ENCODE measurements at regions of chr3 and their contacts with region 1.

Region 1: GRCh38 chr3:112734718-112735350 is 93.9 kb upstream of the CCDC80 start:
- DNase-seq: peak; percentile 78
- ATAC-seq: peak; percentile 81
- H3K4me3 ChIP-seq: no peak overlapping the region
- H3K27ac ChIP-seq: no peak overlapping the region
- H3K4me1 ChIP-seq: 0 out of 2 replicates have a peak, but pooled peaks cover 1% of the 10 kb centered on the region
- H3K27me3 ChIP-seq: no peaks in the 10 kb centered on the region
- CTCF ChIP-seq: peak; percentile 82
- POLR2A ChIP-seq: no peak
- RAD21 ChIP-seq: peak; percentile 86

Region 2: GRCh38 chr3:112303764-112304325 is 431.0 kb before region 1 on chr3:
- CTCF ChIA-PET with region 1: no interaction called
- POLR2A ChIA-PET with region 1: no interaction called
- dilution Hi-C with region 1: no loop called
- in situ Hi-C with region 1: no loop called
- intact Hi-C with region 1: no loop called
- DNase-seq: peak; percentile 28
- ATAC-seq: peak; percentile 64
- H3K4me3 ChIP-seq: peak overlapping the region; percentile 27; the same call in 1 of the 2 replicates
- H3K27ac ChIP-seq: no peak overlapping the region
- H3K4me1 ChIP-seq: peaks cover 12% of the 10 kb centered on the region
- H3K27me3 ChIP-seq: no peaks in the 10 kb centered on the region
- CTCF ChIP-seq: no peak
- POLR2A ChIP-seq: no peak
- RAD21 ChIP-seq: no peak

Region 3: GRCh38 chr3:112582244-112582874 is 152.5 kb before region 1 on chr3:
- CTCF ChIA-PET with region 1: no interaction called
- POLR2A ChIA-PET with region 1: no interaction called
- dilution Hi-C with region 1: no loop called
- in situ Hi-C with region 1: no loop called
- intact Hi-C with region 1: loop called (anchors 10 kb)
- DNase-seq: peak; percentile 80
- ATAC-seq: peak; percentile 80
- H3K4me3 ChIP-seq: no peak overlapping the region
- H3K27ac ChIP-seq: no peak overlapping the region
- H3K4me1 ChIP-seq: peaks cover 4% of the 10 kb centered on the region
- H3K27me3 ChIP-seq: no peaks in the 10 kb centered on the region
- CTCF ChIP-seq: peak; percentile 69
- POLR2A ChIP-seq: no peak
- RAD21 ChIP-seq: peak; percentile 80

Region 4: DNA sequence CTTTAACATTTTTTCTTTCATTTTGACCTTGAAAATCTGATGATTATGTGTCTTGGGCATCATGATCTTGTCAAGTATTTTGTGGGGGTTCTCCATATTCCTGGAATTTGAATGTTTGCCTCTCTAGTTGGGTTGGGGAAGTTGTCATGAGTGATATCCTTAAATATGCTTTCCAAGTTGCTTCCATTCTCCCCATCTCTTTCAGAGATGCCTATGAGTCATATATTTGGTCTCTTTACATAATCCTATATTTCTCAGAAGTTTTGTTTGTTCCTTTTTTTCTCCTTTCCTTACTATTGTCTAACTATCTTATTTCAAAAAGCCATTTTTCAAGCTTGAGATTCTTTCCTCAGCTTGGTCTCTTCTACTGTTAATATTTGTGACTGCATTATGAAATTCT is 24.9 kb before region 1 on chr3:
- CTCF ChIA-PET with region 1: no interaction called
- POLR2A ChIA-PET with region 1: no interaction called
- dilution Hi-C with region 1: no loop called
- in situ Hi-C with region 1: no loop called
- intact Hi-C with region 1: no loop called
- DNase-seq: peak; percentile 17
- ATAC-seq: no peak; the same call in 1 of the 2 replicates
- H3K4me3 ChIP-seq: no peak overlapping the region
- H3K27ac ChIP-seq: no peak overlapping the region
- H3K4me1 ChIP-seq: no peaks in the 10 kb centered on the region
- H3K27me3 ChIP-seq: no peaks in the 10 kb centered on the region
- CTCF ChIP-seq: no peak
- POLR2A ChIP-seq: no peak
- RAD21 ChIP-seq: no peak

Region 5: DNA sequence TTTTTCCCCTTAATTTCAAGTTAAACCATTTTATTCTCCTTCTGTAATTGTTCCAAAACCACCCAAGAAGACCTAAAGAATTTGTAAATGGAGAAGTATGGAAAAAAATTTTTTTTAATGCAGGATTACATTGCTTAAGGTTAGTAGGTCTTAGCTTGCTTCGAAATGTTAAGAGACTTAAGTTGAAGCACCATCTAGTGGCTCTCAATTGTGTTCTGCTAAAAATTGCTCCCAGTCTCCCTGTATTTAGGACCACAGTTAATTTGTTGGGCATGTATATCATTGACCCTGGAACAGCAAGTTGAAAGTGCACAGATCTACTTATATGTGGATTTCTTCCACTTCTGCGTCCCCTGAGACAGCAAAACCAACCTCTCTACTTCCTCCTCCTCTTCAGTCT is 79.4 kb after region 1 on chr3:
- CTCF ChIA-PET with region 1: interaction called, 35 read pairs
- POLR2A ChIA-PET with region 1: no interaction called
- dilution Hi-C with region 1: no loop called
- in situ Hi-C with region 1: no loop called
- intact Hi-C with region 1: loop called (anchors 1 kb)
- DNase-seq: peak; percentile 89
- ATAC-seq: peak; percentile 64
- H3K4me3 ChIP-seq: no peak overlapping the region
- H3K27ac ChIP-seq: peak overlapping the region; percentile 32; the same call in 1 of the 2 replicates
- H3K4me1 ChIP-seq: peaks cover 30% of the 10 kb centered on the region
- H3K27me3 ChIP-seq: no peaks in the 10 kb centered on the region
- CTCF ChIP-seq: peak; percentile 74
- POLR2A ChIP-seq: no peak
- RAD21 ChIP-seq: peak; percentile 83

Region 6: DNA sequence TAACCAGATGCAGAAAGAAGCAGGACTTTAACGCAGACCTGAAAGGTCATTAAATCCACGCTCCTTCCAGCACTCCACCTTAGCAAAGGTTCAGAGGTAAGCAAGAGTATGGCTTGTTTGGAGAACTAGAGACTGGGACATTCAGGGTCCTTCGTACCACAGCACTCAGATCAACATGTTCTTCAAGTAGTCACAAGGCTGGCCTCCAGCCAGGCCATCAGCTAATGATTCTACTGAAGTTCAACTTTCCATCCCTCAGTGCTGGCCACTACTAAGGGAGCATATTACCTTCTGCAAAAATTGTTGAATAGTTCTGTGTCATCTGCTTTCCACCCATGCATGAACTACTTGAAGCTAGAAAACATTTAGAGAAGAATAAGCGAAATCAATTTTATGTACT is 94.2 kb after region 1 on chr3:
- CTCF ChIA-PET with region 1: no interaction called
- POLR2A ChIA-PET with region 1: no interaction called
- dilution Hi-C with region 1: no loop called
- in situ Hi-C with region 1: no loop called
- intact Hi-C with region 1: no loop called
- DNase-seq: no peak
- ATAC-seq: no peak
- H3K4me3 ChIP-seq: no peak overlapping the region
- H3K27ac ChIP-seq: no peak overlapping the region
- H3K4me1 ChIP-seq: no peaks in the 10 kb centered on the region
- H3K27me3 ChIP-seq: no peaks in the 10 kb centered on the region
- CTCF ChIP-seq: no peak
- POLR2A ChIP-seq: no peak
- RAD21 ChIP-seq: no peak

Region 7: GRCh38 chr3:112984485-112984884 is 249.7 kb after region 1 on chr3:
- CTCF ChIA-PET with region 1: interaction called, 5 read pairs
- POLR2A ChIA-PET with region 1: no interaction called
- dilution Hi-C with region 1: no loop called
- in situ Hi-C with region 1: loop called (anchors 10 kb)
- intact Hi-C with region 1: loop called (anchors 1 kb)
- DNase-seq: peak; percentile 12
- ATAC-seq: peak; percentile 21; the same call in 1 of the 2 replicates
- H3K4me3 ChIP-seq: no peak overlapping the region
- H3K27ac ChIP-seq: no peak overlapping the region
- H3K4me1 ChIP-seq: peaks cover 8% of the 10 kb centered on the region
- H3K27me3 ChIP-seq: peaks cover 2% of the 10 kb centered on the region; the same call in 1 of the 2 replicates
- CTCF ChIP-seq: no peak
- POLR2A ChIP-seq: no peak
- RAD21 ChIP-seq: no peak

Region 8: DNA sequence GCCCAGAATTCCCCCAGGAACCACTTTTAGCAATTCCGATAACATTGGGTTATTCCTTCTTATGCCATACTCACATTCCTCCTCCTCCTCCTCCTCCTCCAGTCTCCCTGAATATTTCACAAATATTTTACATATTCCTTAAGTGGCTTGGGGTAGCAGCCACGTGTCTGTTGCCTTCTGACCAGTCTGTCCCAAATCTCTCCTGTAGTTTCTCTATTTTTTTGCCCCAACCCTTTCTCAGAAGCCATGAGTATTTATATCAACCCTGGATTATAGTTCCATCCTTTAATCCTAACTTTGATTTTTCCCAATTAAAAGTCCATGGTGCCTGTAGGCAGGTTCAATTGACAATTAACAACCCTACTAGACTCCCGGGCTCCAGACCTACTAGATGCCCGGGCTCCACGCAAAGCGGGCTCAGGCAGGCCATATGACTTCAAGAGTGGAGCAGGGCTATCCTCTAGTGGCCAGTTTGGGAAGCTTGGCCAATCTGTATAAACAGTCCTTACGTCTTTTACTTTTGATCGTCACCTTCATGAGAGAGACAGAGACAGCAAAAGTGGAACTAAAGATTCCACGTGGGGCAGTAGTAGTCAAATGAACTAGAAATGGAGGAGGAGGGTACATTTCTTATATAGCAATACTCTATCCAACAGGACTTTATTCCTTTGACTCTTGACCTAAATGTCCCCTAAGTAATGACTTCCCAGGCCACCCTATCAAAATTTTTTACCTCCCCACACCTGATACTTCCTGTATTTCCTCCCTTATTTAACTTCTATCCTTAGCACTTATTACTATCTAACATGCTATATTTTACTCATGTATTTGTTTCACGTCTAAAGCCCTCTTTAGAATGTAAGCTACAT is 891.9 kb after region 1 on chr3:
- CTCF ChIA-PET with region 1: no interaction called
- POLR2A ChIA-PET with region 1: no interaction called
- dilution Hi-C with region 1: no loop called
- in situ Hi-C with region 1: no loop called
- intact Hi-C with region 1: loop called (anchors 10 kb)
- DNase-seq: peak; percentile 58
- ATAC-seq: peak; percentile 93
- H3K4me3 ChIP-seq: no peak overlapping the region
- H3K27ac ChIP-seq: no peak overlapping the region
- H3K4me1 ChIP-seq: peaks cover 2% of the 10 kb centered on the region; the same call in 1 of the 2 replicates
- H3K27me3 ChIP-seq: peaks cover 13% of the 10 kb centered on the region
- CTCF ChIP-seq: peak; percentile 83
- POLR2A ChIP-seq: no peak
- RAD21 ChIP-seq: peak; percentile 82

Measured in IMR-90 (cell line).